Mucosa of descending colon (tissue), 3 donors: ENCODE measurements at regions of chr5 and their contacts with region 1.

Region 1: GRCh38 chr5:155943516-155944407 is 383.2 kb upstream of the SGCD start:
- DNase-seq: peak in 2 of 3 donors; percentile 61 to 70
- ATAC-seq: peak; percentile 81
- H3K4me3 ChIP-seq: no peak overlapping the region
- H3K4me1 ChIP-seq: no peaks in the 10 kb centered on the region
- CTCF ChIP-seq: peak; percentile 52

Region 2: GRCh38 chr5:156824800-156825199 is 881.0 kb after region 1 on chr5:
- intact Hi-C with region 1: loop called in 1 of 2 experiments (anchors 10 kb)
- DNase-seq: peak in 1 of 3 donors; percentile 6
- ATAC-seq: no peak
- H3K4me3 ChIP-seq: no peak overlapping the region
- H3K4me1 ChIP-seq: no peaks in the 10 kb centered on the region
- CTCF ChIP-seq: no peak